CD4-positive, alpha-beta memory T cell (primary cell): ENCODE measurements at regions of chr1 and their contacts with region 1.

Region 1: DNA sequence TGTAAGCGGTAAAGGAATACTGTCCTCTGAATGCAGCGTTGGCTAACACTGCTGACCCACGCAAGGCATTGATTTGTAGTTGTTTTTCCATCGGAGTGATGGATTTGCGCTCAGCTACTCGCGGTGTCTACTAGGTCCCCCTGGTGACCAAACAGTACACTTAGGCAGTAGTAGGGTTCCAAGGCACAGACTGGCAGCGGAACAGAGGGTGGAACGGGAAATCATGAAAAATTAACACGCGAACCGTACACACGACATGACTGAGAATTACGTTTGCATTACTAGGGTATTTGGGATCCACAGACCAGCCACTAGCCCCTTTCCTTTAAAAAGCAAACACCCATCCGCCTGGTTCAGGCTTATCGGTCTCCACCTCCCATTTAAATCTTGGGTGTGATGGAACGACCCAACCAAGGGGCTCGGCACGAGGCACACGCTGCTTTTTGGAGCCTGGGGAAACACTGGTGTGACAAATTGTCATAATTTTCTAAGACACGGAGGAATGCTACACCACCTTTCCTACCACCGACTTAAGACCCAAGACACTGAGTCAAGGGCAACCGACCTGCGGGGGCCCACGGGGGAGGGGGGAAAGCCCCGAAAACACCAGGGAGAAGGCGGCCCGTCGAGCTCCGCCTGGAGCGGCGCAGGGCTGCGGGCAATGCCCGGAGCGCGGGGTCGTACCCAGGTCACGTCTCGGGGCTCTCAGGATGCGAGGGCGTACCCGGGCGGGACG is 699 bp downstream of the DIPK1A start:
- DNase-seq: peak; percentile 75 to 88 (median 80)
- H3K4me3 ChIP-seq: peak overlapping the region; percentile 48 to 76
- H3K4me3 Mint-ChIP-seq: peak overlapping the region; percentile 89 to 98 (median 92)
- H3K27ac ChIP-seq: peak overlapping the region; percentile 98
- H3K27ac Mint-ChIP-seq: peak overlapping the region; percentile 97 to 99 (median 99)
- H3K4me1 ChIP-seq: peaks cover 76% of the 10 kb centered on the region
- H3K4me1 Mint-ChIP-seq: peaks cover 35 to 45% (median 40%) of the 10 kb centered on the region in 4 donors
- H3K27me3 ChIP-seq: no peaks in the 10 kb centered on the region
- H3K27me3 Mint-ChIP-seq: no peaks in the 10 kb centered on the region

Region 2: DNA sequence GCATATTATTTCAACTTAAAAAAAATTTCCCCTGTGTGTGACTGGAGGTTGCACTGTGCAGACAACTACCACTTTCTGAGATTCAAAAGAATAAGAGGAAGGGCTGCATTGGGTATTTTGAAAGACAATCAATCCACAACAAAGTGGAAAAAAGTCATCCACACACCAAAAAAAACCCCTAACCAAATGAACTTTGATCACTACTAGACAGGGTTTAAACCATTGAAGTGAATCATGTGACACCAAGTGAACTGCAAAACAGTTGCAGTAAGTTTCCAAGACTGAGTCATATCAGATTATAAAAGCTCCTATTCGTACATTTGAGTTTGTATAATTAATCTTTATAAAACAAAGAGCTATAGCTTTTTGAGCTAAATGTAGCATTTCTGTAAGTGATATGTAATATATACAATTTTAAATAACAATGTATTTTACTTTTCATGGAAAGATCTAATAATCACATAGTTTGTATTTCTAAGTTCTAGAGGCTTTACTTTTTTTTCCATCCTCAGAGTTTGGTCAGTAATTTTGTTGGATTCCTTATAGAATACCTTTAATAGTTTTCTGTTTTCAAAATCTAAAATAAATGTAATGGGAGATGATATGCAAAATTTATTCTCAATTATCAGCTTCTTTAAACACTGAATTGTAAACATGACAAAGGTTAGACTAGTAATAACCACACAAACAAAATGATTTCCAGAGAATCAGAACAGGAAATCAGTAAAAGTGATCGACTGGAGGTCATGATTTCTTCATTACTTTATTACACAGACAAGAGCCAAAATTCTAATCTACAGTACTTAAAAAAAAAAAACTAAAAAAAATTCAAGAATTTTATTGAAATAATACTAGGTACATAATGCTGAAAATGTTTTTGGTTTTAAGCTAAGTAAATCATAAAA is 423.3 kb before region 1 on chr1:
- CTCF ChIA-PET with region 1: no interaction called
- POLR2A ChIA-PET with region 1: no interaction called
- intact Hi-C with region 1: loop called (anchors 2 kb)
- DNase-seq: peak; percentile 70 to 84 (median 75)
- H3K4me3 ChIP-seq: no peak overlapping the region
- H3K4me3 Mint-ChIP-seq: peak overlapping the region; percentile 58 to 83 (median 75)
- H3K27ac ChIP-seq: peak overlapping the region; percentile 46
- H3K27ac Mint-ChIP-seq: peak overlapping the region; percentile 66 to 91 (median 85)
- H3K4me1 ChIP-seq: peaks cover 35% of the 10 kb centered on the region
- H3K4me1 Mint-ChIP-seq: peaks cover 39 to 71% (median 53%) of the 10 kb centered on the region in 4 donors
- H3K27me3 ChIP-seq: no peaks in the 10 kb centered on the region
- H3K27me3 Mint-ChIP-seq: no peaks in the 10 kb centered on the region

Region 3: DNA sequence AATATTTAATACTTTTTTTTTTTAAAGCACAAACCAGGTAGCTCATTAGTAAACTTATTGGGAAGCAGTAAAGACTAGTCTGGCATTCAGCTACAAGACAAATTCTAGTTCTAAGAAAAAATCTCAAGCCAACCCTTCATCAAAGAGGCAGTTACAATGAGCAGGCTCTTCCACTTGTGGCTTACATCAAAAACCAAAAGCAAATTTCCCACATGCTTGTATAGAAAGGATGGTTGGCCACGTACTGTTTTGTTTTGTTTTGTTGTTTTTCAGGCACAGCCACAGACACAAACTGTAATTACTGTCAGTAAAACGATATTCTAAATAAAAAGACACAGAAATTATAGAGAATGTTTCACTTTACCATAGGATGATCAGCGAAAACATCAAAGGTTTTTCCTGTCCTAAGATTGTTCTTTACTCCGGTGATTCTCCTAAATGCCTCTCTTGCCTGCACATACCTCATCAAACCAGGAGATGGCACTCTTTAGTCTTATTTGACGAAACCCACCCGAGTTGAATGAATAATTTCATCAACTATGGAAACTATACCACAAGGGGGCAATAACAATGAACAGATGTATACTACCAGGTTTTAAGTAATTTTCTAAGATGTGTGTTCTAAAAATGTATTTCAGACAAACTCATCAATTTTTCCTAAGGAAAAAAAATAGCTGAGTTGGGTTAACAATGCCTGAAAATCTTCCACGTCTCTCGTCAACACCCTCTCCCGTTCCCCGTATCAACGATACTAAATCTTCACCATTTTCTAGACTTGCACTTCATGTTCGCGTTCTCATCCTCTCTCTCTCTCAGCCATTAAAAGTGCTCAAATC is 101.8 kb before region 1 on chr1:
- CTCF ChIA-PET with region 1: interaction called, 263 read pairs
- POLR2A ChIA-PET with region 1: interaction called, 79 read pairs
- intact Hi-C with region 1: loop called (anchors 1 kb)
- DNase-seq: peak; percentile 70 to 84 (median 80)
- H3K4me3 ChIP-seq: no peak overlapping the region
- H3K4me3 Mint-ChIP-seq: peak overlapping the region; percentile 48 to 81 (median 71)
- H3K27ac ChIP-seq: peak overlapping the region; percentile 6
- H3K27ac Mint-ChIP-seq: peak overlapping the region; percentile 14 to 89 (median 68)
- H3K4me1 ChIP-seq: peaks cover 22% of the 10 kb centered on the region
- H3K4me1 Mint-ChIP-seq: peaks cover 14 to 17% (median 15%) of the 10 kb centered on the region in 4 donors
- H3K27me3 ChIP-seq: no peaks in the 10 kb centered on the region
- H3K27me3 Mint-ChIP-seq: no peaks in the 10 kb centered on the region

Region 4: GRCh38 chr1:92944901-92945747 is 15.4 kb before region 1 on chr1:
- CTCF ChIA-PET with region 1: interaction called, 52 read pairs
- POLR2A ChIA-PET with region 1: interaction called, 48 read pairs
- intact Hi-C with region 1: no loop called
- DNase-seq: no peak
- H3K4me3 ChIP-seq: no peak overlapping the region
- H3K4me3 Mint-ChIP-seq: peak overlapping the region in 2 of 8 donors; percentile 4 to 17
- H3K27ac ChIP-seq: no peak overlapping the region
- H3K27ac Mint-ChIP-seq: peak overlapping the region in 2 of 7 donors; percentile 12 to 23
- H3K4me1 ChIP-seq: peaks cover 46% of the 10 kb centered on the region
- H3K4me1 Mint-ChIP-seq: peaks cover 39 to 56% (median 48%) of the 10 kb centered on the region in 4 donors
- H3K27me3 ChIP-seq: no peaks in the 10 kb centered on the region
- H3K27me3 Mint-ChIP-seq: no peaks in the 10 kb centered on the region

Region 5: GRCh38 chr1:92994105-92994712 is 33.6 kb after region 1 on chr1:
- CTCF ChIA-PET with region 1: interaction called, 251 read pairs
- POLR2A ChIA-PET with region 1: interaction called, 138 read pairs
- intact Hi-C with region 1: loop called (anchors 1 kb)
- DNase-seq: peak; percentile 78 to 84 (median 80)
- H3K4me3 ChIP-seq: no peak overlapping the region
- H3K4me3 Mint-ChIP-seq: peak overlapping the region in 1 of 8 donors; percentile 80
- H3K27ac ChIP-seq: no peak overlapping the region
- H3K27ac Mint-ChIP-seq: peak overlapping the region; percentile 52 to 88 (median 77)
- H3K4me1 ChIP-seq: peaks cover 49% of the 10 kb centered on the region
- H3K4me1 Mint-ChIP-seq: peaks cover 36 to 50% (median 42%) of the 10 kb centered on the region in 4 donors
- H3K27me3 ChIP-seq: no peaks in the 10 kb centered on the region
- H3K27me3 Mint-ChIP-seq: no peaks in the 10 kb centered on the region

Region 6: GRCh38 chr1:93179886-93180722 is 219.5 kb after region 1 on chr1 and contains the start of gene TMED5:
- CTCF ChIA-PET with region 1: no interaction called
- POLR2A ChIA-PET with region 1: interaction called, 4 read pairs
- intact Hi-C with region 1: loop called (anchors 2 kb)
- DNase-seq: peak; percentile 97 to 98 (median 97)
- H3K4me3 ChIP-seq: peak within 1 kb of the TSS; percentile 84 to 99
- H3K4me3 Mint-ChIP-seq: peak within 1 kb of the TSS; percentile 89 to 99 (median 93)
- H3K27ac ChIP-seq: peak within 1 kb of the TSS; percentile 98
- H3K27ac Mint-ChIP-seq: peak within 1 kb of the TSS; percentile 90 to 99 (median 96)
- H3K4me1 ChIP-seq: peaks cover 59% of the 10 kb centered on the region
- H3K4me1 Mint-ChIP-seq: peaks cover 26 to 70% (median 41%) of the 10 kb centered on the region in 4 donors
- H3K27me3 ChIP-seq: no peaks in the 10 kb centered on the region
- H3K27me3 Mint-ChIP-seq: no peaks in the 10 kb centered on the region
- total RNA-seq, gene TMED5: 60.1 to 60.8 TPM